Right cardiac atrium (tissue), 5 donors: ENCODE measurements at regions of chr15 and their contacts with region 1.

Region 1: DNA sequence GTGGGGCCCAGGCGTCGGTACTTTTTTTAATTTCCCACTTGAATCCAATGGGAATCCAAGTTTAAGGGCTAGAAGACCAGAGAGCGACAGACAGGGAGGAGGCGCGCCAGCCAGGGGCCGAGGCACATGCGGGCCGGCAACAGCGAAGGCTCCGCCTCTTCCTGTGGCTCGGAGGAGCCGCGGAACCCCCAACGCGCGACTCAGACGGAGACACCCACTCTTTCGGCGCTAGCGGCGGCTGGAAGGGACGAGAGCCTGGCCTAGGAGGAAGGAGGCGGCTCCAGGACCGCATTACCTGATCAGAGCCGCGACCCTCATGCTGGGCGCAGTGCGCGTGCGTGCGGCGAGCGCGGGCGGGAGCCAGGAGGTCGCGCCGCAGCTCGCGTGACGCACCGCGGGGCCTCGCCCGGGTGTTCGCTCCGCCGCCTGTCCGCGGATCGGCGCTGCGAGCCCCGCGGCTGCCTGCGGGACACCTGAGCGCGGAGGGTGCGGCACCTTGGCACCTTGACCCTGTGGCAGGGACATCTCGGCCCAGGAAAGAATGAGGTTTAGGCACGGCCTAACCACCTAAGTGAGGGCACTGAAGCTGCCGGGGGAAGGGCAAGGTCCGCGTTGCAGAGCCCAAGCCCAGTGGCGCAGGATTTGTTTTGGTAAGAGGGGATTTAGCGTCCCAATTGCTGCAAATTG is at the start of gene DPH6:
- DNase-seq: peak; percentile 91 to 96 (median 96)
- ATAC-seq: peak; percentile 97
- H3K4me3 ChIP-seq: peak within 1 kb of the TSS; percentile 57
- H3K27ac ChIP-seq: peak within 1 kb of the TSS; percentile 98
- H3K4me1 ChIP-seq: no peaks in the 10 kb centered on the region
- H3K27me3 ChIP-seq: no peaks in the 10 kb centered on the region
- total RNA-seq, gene DPH6: 12.0 to 19.7 (median 15.6) TPM

Region 2: DNA sequence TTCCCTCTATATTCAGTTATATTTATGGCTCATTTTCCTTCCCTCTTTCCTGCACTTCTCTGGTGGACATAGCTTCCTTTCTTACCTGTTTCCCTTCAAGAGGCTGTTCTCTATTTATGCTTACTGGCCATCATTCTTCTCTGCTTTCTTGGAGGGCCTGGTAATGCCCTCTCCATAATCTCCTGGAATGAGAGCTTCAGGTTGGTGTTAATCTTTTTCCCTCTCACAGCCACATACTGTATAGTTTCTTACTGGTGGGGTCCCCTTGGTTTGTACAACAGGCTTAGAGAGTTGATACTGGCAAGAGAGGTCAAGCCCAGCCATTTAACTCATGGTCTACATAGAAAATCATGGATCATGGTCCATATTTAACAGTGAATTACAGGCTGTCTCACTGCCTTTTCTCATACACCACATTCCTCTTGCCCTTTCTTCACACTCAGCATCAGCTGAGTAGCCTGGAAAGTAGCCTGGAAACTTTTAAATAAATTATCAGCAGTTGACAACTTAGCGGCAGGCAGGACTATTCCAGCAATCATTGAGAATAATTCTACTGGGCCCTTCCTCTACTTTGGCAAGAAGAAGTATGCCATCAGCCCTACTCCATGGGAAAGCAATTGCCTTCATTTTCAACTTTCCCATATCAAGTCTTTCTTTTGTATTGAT is 38.0 kb after region 1 on chr15:
- intact Hi-C with region 1: no loop called
- DNase-seq: no peak
- ATAC-seq: peak; percentile 91 to 95
- H3K4me3 ChIP-seq: no peak overlapping the region
- H3K27ac ChIP-seq: peak overlapping the region; percentile 73
- H3K4me1 ChIP-seq: peaks cover 3% of the 10 kb centered on the region
- H3K27me3 ChIP-seq: no peaks in the 10 kb centered on the region

Region 3: DNA sequence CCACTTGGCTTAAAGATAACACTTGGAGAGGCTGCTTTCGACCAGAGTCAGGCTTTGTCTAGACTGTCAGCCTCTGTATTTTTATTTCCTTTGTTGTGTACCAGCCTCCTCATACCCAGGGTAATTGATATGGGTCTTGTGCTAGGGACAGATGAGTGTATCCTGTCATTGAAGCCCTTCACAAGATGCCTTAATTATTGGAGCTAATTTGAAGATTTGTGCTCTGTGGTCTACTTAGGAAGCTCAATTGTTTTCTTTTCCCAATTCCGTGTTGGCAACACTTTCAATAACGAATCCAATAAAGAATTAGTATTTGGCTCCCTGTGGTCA is 60.4 kb after region 1 on chr15:
- intact Hi-C with region 1: no loop called
- DNase-seq: no peak
- ATAC-seq: peak; percentile 51 to 52
- H3K4me3 ChIP-seq: no peak overlapping the region
- H3K27ac ChIP-seq: no peak overlapping the region
- H3K4me1 ChIP-seq: no peaks in the 10 kb centered on the region
- H3K27me3 ChIP-seq: no peaks in the 10 kb centered on the region

Region 4: DNA sequence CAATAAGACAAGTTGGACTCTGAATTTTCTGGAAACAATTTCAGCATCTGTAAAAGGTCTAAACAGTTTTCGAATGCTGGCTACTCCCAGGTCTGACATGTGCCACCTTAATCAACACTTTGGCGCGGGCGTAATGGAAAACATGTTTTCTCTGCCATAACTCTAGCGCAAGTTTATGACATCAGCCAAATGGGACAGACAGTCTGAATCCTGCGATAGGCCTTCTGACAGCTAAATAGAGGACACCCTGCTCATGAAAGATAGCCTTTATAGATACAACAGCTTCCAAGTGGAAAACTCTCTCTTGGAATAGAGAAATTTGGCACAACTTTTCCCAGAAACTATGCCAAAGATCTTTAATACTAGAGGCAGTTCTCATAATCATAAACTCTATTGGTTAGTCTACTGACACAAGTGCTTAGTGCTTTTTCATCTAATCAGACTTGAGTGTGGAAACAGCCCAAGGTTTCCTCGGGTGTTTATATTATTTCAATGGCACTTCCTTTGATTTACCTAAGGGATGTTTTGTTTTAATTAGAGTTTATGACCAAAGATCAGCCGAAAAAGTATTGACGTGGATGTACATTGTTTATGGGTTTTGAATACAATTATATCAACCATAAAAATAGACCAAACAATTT is 120.0 kb after region 1 on chr15:
- intact Hi-C with region 1: loop called in 1 of 4 experiments (anchors 5 kb)
- DNase-seq: peak; percentile 70 to 86 (median 77)
- ATAC-seq: peak; percentile 96 to 97
- H3K4me3 ChIP-seq: no peak overlapping the region
- H3K27ac ChIP-seq: peak overlapping the region; percentile 54
- H3K4me1 ChIP-seq: peaks cover 5% of the 10 kb centered on the region
- H3K27me3 ChIP-seq: no peaks in the 10 kb centered on the region

Region 5: GRCh38 chr15:35680951-35681350 is 135.0 kb after region 1 on chr15:
- intact Hi-C with region 1: loop called in 1 of 4 experiments (anchors 10 kb)
- DNase-seq: no peak
- ATAC-seq: no peak
- H3K4me3 ChIP-seq: no peak overlapping the region
- H3K27ac ChIP-seq: no peak overlapping the region
- H3K4me1 ChIP-seq: peaks cover 1% of the 10 kb centered on the region
- H3K27me3 ChIP-seq: no peaks in the 10 kb centered on the region